A549 (cell line): ENCODE measurements at regions of chr5 and their contacts with region 1.

Region 1: GRCh38 chr5:149822301-149822700 is 92.2 kb downstream of the PPARGC1B start:
- DNase-seq: no peak
- ATAC-seq: no peak
- H3K4me3 ChIP-seq: no peak overlapping the region
- H3K27ac ChIP-seq: no peak overlapping the region
- H3K4me1 ChIP-seq: no peaks in the 10 kb centered on the region
- CTCF ChIP-seq: no peak
- EP300 ChIP-seq: no peak
- POLR2A ChIP-seq: no peak
- RAD21 ChIP-seq: no peak

Region 2: DNA sequence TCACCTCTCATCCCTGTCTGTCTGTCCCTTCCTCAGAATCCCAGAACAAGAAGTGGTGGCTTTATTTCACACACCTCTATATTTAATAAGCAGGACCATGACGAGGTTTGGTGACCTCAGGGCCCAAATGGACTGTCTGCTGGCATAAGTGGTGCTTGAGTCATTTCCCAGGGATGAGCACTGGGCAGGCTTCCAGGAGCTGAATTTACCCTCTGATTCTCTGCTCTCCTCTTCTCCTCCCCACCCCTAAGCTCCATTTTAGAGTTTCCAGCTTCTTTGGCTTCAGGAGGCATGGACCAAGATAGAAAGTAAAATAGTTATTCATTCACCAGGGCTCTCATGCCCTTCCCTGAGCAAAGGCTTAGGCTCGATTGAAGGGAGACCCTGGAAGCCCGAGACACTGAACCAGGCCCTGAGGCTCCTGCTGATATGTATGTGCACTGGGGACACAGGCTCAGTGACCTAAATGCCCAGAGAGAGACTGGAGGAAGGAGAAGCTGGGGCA is 23.1 kb before region 1 on chr5:
- CTCF ChIA-PET with region 1: interaction called, 32 read pairs
- POLR2A ChIA-PET with region 1: no interaction called
- DNase-seq: peak; percentile 91 to 94
- ATAC-seq: peak; percentile 85 to 89
- H3K4me3 ChIP-seq: 0 out of 3 replicates have a peak overlapping the region, but pooled peaks have one; percentile 4
- H3K27ac ChIP-seq: peak overlapping the region; percentile 88 to 95
- H3K4me1 ChIP-seq: peaks cover 67% of the 10 kb centered on the region
- CTCF ChIP-seq: no peak
- EP300 ChIP-seq: no peak
- POLR2A ChIP-seq: no peak
- RAD21 ChIP-seq: no peak

Region 3: DNA sequence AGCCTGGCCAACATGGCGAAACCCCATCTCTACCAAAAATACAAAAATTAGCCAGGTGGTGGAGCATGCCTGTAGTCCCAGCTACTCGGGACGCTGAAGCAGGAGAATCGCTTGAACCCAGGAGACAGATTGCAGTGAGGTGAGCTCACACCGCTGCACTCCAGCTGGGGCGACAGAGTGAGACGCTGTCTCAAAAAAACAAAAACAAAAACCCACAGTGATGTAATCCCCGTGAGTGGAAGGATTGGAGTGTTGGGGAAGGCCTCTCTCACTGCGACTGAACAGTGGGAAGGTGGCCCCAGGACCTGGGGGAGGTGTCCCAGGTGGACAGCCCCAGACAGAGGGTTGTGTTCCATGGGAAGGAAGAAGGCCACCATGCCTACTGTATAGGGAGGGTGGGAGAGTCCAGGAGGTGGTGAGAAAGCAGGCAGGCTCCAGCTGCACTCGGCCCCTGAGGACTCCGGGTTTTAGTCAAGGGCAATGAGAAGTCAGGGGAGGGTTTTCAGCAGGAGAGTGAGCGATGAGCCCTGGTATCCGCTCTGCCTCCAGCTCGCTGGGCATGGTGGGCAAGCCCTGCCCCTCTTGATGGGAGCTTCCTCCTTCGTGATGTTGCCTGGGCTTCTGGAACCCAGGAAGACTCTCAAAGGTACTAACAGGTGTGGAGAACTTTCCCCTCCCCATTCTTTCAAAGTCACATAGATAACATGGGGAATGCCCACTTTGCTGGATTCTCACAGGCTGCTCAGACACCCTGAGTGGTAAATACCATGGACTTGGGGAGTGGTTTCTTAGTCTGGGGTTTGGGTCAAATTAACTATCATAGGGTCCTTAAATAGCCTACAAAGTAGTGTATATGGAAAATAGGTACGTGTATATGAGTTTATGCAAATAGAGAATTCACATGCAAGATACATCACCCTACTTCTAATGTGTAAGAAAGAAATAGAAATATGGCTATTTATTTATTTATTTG is 17.5 kb before region 1 on chr5:
- CTCF ChIA-PET with region 1: interaction called, 10 read pairs
- POLR2A ChIA-PET with region 1: no interaction called
- DNase-seq: no peak
- ATAC-seq: no peak
- H3K4me3 ChIP-seq: no peak overlapping the region
- H3K27ac ChIP-seq: peak overlapping the region; percentile 78 to 95
- H3K4me1 ChIP-seq: peaks cover 55% of the 10 kb centered on the region
- CTCF ChIP-seq: no peak
- EP300 ChIP-seq: no peak
- POLR2A ChIP-seq: no peak
- RAD21 ChIP-seq: no peak

Region 4: DNA sequence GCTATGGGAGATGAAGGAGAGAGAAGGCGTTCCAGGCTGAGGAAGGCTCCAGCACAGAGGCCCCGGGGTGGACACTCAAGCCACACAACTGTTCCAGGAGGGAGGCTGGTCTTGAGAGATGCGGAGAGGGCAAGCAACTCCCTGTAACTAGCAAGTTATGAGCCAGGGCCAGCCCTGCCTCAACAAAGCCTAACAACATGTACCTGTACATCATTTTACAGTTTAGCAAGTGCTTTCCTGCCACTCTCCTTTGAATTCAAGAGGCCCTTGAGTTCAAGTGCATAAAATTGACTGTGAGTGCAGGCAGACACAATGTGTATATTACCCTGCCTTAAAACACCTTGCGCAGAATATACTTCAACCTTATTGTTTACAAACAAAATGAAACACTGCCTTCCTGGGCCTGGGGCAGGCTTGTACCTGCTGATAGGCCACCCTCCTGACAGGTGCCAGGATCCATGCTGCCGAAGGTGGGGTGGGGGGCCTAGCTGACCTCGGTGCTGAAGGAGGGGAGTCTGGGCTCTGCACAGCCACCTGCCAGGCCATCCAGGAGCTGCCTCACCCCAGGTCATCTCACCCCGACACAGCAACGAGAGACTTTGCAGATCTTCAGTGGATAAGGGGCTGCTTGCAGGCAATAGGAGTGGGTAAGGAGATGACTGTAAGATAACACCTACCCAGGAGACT is 12.2 kb before region 1 on chr5:
- CTCF ChIA-PET with region 1: interaction called, 54 read pairs
- POLR2A ChIA-PET with region 1: no interaction called
- DNase-seq: no peak
- ATAC-seq: no peak
- H3K4me3 ChIP-seq: no peak overlapping the region
- H3K27ac ChIP-seq: 0 out of 6 replicates have a peak overlapping the region, but pooled peaks of 1 of the 2 experiments have one; percentile 21
- H3K4me1 ChIP-seq: peaks cover 19% of the 10 kb centered on the region
- CTCF ChIP-seq: no peak
- EP300 ChIP-seq: no peak
- POLR2A ChIP-seq: no peak
- RAD21 ChIP-seq: no peak

Region 5: GRCh38 chr5:150163547-150164059 is 341.3 kb after region 1 on chr5:
- CTCF ChIA-PET with region 1: no interaction called
- POLR2A ChIA-PET with region 1: no interaction called
- DNase-seq: no peak
- ATAC-seq: no peak
- H3K4me3 ChIP-seq: no peak overlapping the region
- H3K27ac ChIP-seq: peak overlapping the region in 1 of 2 experiments; percentile 61; a peak in 2 of 6 replicates
- H3K4me1 ChIP-seq: peaks cover 8% of the 10 kb centered on the region; the same call in 1 of the 3 replicates
- CTCF ChIP-seq: no peak
- EP300 ChIP-seq: no peak
- POLR2A ChIP-seq: no peak
- RAD21 ChIP-seq: no peak